ENCODE measurements at regions of chr14 and their contacts with region 1.

Region 1: GRCh38 chr14:66380143-66380542 is 106.0 kb upstream of the CCDC196 start:
- DNase-seq: no peak
- ATAC-seq: no peak
- H3K4me3 Mint-ChIP-seq: no peak overlapping the region
- H3K27ac Mint-ChIP-seq: no peak overlapping the region
- H3K4me1 Mint-ChIP-seq: no peaks in the 10 kb centered on the region
- H3K27me3 Mint-ChIP-seq: peaks cover 2% of the 10 kb centered on the region

Region 2: GRCh38 chr14:66395300-66395699 is 15.2 kb after region 1 on chr14:
- CTCF ChIA-PET with region 1: interaction called, 15 read pairs
- POLR2A ChIA-PET with region 1: no interaction called
- DNase-seq: peak; percentile 65
- ATAC-seq: peak; percentile 89
- H3K4me3 Mint-ChIP-seq: no peak overlapping the region
- H3K27ac Mint-ChIP-seq: no peak overlapping the region
- H3K4me1 Mint-ChIP-seq: peaks cover 10% of the 10 kb centered on the region
- H3K27me3 Mint-ChIP-seq: peaks cover 12% of the 10 kb centered on the region